ENCODE measurements at regions of chr13 and their contacts with region 1.

Region 1: GRCh38 chr13:28819735-28820098 is 422 bp upstream of the MTUS2 start:
- DNase-seq: no peak
- ATAC-seq: peak; percentile 92
- H3K4me3 ChIP-seq: peak overlapping the region in 1 of 2 experiments; percentile 40; a peak in 2 of 4 replicates
- H3K27ac ChIP-seq: no peak overlapping the region
- H3K4me1 ChIP-seq: peaks cover 3 to 8% of the 10 kb centered on the region in 2 experiments; a peak in 2 of 4 replicates
- H3K27me3 ChIP-seq: peaks cover 19% of the 10 kb centered on the region; the same call in 1 of the 2 replicates
- CTCF ChIP-seq: peak in 2 of 3 experiments; percentile 13 to 15; a peak in 1 of 6 replicates
- POLR2A ChIP-seq: no peak
- RAD21 ChIP-seq: peak; percentile 9; the same call in 1 of the 2 replicates

Region 2: DNA sequence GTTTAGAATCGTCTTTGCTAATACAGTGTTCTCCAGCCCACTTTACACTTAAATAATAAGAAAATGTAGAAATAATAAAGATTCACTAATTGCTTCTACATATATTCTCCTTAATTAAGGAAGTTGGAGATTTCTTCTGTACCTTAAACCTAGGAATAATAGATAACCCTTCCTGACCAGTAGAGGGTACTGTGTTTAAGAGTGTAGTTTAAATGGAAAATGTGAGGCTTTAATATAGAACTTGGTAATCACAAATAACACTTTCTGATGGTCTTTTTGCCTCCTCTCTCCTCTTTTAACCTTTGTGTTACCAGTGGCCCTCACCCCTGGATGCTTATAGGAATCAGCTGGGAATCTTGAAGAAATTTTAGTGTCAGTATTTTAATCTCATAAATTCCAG is 140.1 kb before region 1 on chr13:
- CTCF ChIA-PET with region 1: no interaction called
- POLR2A ChIA-PET with region 1: no interaction called
- RAD21 ChIA-PET with region 1: no interaction called
- intact Hi-C with region 1: no loop called
- DNase-seq: no peak
- ATAC-seq: peak; percentile 56; the same call in 1 of the 2 replicates
- H3K4me3 ChIP-seq: no peak overlapping the region
- H3K27ac ChIP-seq: no peak overlapping the region
- H3K4me1 ChIP-seq: peaks cover 0 to 5% of the 10 kb centered on the region in 2 experiments; a peak in 1 of 4 replicates
- H3K27me3 ChIP-seq: no peaks in the 10 kb centered on the region
- CTCF ChIP-seq: peak; percentile 12 to 53 (median 35); a peak in 5 of 6 replicates
- POLR2A ChIP-seq: no peak
- RAD21 ChIP-seq: peak; percentile 37; the same call in 1 of the 2 replicates

Region 3: DNA sequence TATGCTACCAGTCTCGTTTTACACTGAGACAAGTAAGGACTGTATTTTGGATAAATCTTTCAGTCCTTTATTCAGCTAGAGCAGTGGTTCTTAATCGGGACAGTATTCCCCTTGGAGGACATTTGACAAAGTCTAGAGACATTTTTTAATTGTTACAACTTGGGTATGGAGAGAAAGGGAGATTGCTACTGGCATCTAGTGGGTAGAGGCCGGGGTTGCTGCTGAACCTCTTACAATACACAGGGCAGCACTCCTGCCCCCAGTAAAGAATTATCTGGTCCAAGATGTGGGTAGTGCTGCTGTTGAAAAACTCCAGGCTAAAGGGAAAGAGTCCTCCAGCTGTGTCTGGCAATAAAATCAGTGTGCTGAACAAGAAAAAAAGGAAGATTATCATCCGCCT is 441.0 kb after region 1 on chr13:
- CTCF ChIA-PET with region 1: no interaction called
- POLR2A ChIA-PET with region 1: no interaction called
- RAD21 ChIA-PET with region 1: no interaction called
- intact Hi-C with region 1: loop called (anchors 5 kb)
- DNase-seq: no peak
- ATAC-seq: no peak
- H3K4me3 ChIP-seq: no peak overlapping the region
- H3K27ac ChIP-seq: no peak overlapping the region
- H3K4me1 ChIP-seq: no peaks in the 10 kb centered on the region
- H3K27me3 ChIP-seq: peaks cover 40% of the 10 kb centered on the region
- CTCF ChIP-seq: peak in 2 of 3 experiments; percentile 13 to 19; a peak in 1 of 6 replicates
- POLR2A ChIP-seq: no peak
- RAD21 ChIP-seq: no peak

Measured in HCT116 (cell line).